CD8-positive, alpha-beta memory T cell (primary cell): ENCODE measurements at regions of chr2 and their contacts with region 1.

Region 1: GRCh38 chr2:68774569-68775271 is 40.1 kb downstream of the ARHGAP25 start:
- DNase-seq: peak; percentile 43 to 74 (median 53)
- H3K4me3 ChIP-seq: peak overlapping the region; percentile 65
- H3K4me3 Mint-ChIP-seq: peak overlapping the region; percentile 91 to 97 (median 95)
- H3K27ac ChIP-seq: peak overlapping the region; percentile 71
- H3K27ac Mint-ChIP-seq: peak overlapping the region; percentile 90 to 100 (median 97)
- H3K4me1 ChIP-seq: peaks cover 92% of the 10 kb centered on the region
- H3K4me1 Mint-ChIP-seq: peaks cover 86 to 91% (median 87%) of the 10 kb centered on the region in 3 donors
- H3K27me3 ChIP-seq: no peaks in the 10 kb centered on the region
- H3K27me3 Mint-ChIP-seq: no peaks in the 10 kb centered on the region

Region 2: GRCh38 chr2:68662466-68662865 is 112.3 kb before region 1 on chr2:
- CTCF ChIA-PET with region 1: no interaction called
- POLR2A ChIA-PET with region 1: no interaction called
- DNase-seq: no peak
- H3K4me3 ChIP-seq: no peak overlapping the region
- H3K4me3 Mint-ChIP-seq: no peak overlapping the region
- H3K27ac ChIP-seq: no peak overlapping the region
- H3K27ac Mint-ChIP-seq: no peak overlapping the region
- H3K4me1 ChIP-seq: no peaks in the 10 kb centered on the region
- H3K4me1 Mint-ChIP-seq: no peaks in the 10 kb centered on the region
- H3K27me3 ChIP-seq: no peaks in the 10 kb centered on the region
- H3K27me3 Mint-ChIP-seq: peaks cover 10 to 59% of the 10 kb centered on the region in 2 donors

Region 3: GRCh38 chr2:68742626-68743415 is 31.9 kb before region 1 on chr2:
- CTCF ChIA-PET with region 1: interaction called, 10 read pairs
- POLR2A ChIA-PET with region 1: no interaction called
- DNase-seq: no peak
- H3K4me3 ChIP-seq: no peak overlapping the region
- H3K4me3 Mint-ChIP-seq: peak overlapping the region; percentile 30 to 81 (median 72)
- H3K27ac ChIP-seq: no peak overlapping the region
- H3K27ac Mint-ChIP-seq: peak overlapping the region; percentile 58 to 89 (median 80)
- H3K4me1 ChIP-seq: peaks cover 98% of the 10 kb centered on the region
- H3K4me1 Mint-ChIP-seq: peaks cover 90 to 97% (median 96%) of the 10 kb centered on the region in 3 donors
- H3K27me3 ChIP-seq: no peaks in the 10 kb centered on the region
- H3K27me3 Mint-ChIP-seq: no peaks in the 10 kb centered on the region

Region 4: GRCh38 chr2:68789603-68790002 is 14.9 kb after region 1 on chr2:
- CTCF ChIA-PET with region 1: interaction called, 10 read pairs
- POLR2A ChIA-PET with region 1: interaction called, 6 read pairs
- DNase-seq: no peak
- H3K4me3 ChIP-seq: no peak overlapping the region
- H3K4me3 Mint-ChIP-seq: peak overlapping the region in 4 of 7 donors; percentile 13 to 33 (median 18)
- H3K27ac ChIP-seq: no peak overlapping the region
- H3K27ac Mint-ChIP-seq: peak overlapping the region in 7 of 8 donors; percentile 77 to 91 (median 84)
- H3K4me1 ChIP-seq: peaks cover 70% of the 10 kb centered on the region
- H3K4me1 Mint-ChIP-seq: peaks cover 52 to 53% (median 52%) of the 10 kb centered on the region in 3 donors
- H3K27me3 ChIP-seq: no peaks in the 10 kb centered on the region
- H3K27me3 Mint-ChIP-seq: no peaks in the 10 kb centered on the region

Region 5: GRCh38 chr2:68889500-68890185 is 114.9 kb after region 1 on chr2:
- CTCF ChIA-PET with region 1: no interaction called
- POLR2A ChIA-PET with region 1: no interaction called
- DNase-seq: no peak
- H3K4me3 ChIP-seq: no peak overlapping the region
- H3K4me3 Mint-ChIP-seq: no peak overlapping the region
- H3K27ac ChIP-seq: no peak overlapping the region
- H3K27ac Mint-ChIP-seq: no peak overlapping the region
- H3K4me1 ChIP-seq: no peaks in the 10 kb centered on the region
- H3K4me1 Mint-ChIP-seq: no peaks in the 10 kb centered on the region
- H3K27me3 ChIP-seq: no peaks in the 10 kb centered on the region
- H3K27me3 Mint-ChIP-seq: peaks cover 0 to 2% of the 10 kb centered on the region in 2 donors